Naive thymus-derived CD4-positive, alpha-beta T cell (primary cell): ENCODE measurements at regions of chr1 and their contacts with region 1.

Region 1: DNA sequence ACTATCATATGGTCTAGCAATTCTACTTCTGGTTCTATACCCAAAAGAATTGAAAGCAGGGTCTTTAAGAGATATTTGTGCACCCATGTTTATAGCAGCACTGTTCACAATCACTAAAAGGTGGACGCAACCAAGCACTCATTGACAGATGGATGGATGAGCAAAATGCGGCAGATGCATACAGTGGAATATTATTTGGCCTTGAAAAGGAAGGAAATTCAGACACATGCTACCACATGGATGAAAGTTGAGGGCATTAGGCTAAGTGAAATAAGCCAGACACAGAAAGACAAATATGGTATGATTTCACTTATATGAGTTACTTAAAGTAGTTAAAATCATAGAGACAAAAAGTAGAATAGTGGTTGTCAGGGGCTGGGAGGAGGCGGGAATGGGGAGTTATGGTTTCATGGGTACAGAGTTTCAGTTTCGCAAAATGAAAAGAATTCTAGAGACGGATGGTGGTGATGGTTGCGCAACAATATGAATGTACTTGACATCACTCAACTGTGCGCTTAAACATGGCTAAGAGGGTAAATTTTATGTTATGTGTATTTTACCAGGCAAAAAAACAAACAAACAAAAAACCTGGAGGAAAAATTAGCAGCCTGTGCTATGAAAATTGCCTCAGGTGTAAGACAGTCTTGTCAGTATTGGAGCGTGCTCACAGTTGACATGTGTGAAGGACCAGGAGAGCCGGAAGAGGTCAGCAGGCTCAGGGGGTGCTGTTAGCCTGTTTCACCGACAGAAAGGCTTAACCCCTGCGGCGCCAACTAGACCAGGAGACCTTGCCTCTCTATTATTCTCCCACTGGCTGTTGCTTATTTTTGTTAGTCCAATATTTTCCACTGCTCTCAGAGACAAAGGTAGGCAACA is 26.5 kb downstream of the CD247 start:
- DNase-seq: peak in 6 of 9 donors; percentile 46 to 69 (median 54)
- ATAC-seq: peak; percentile 42
- H3K4me3 ChIP-seq: peak overlapping the region; percentile 35
- H3K4me3 Mint-ChIP-seq: peak overlapping the region; percentile 75 to 88 (median 82)
- H3K27ac ChIP-seq: peak overlapping the region; percentile 96
- H3K27ac Mint-ChIP-seq: peak overlapping the region; percentile 84 to 100 (median 95)
- H3K4me1 ChIP-seq: peaks cover 49 to 94% of the 10 kb centered on the region in 2 donors
- H3K4me1 Mint-ChIP-seq: peaks cover 71 to 100% (median 95%) of the 10 kb centered on the region in 7 donors
- H3K27me3 ChIP-seq: no peaks in the 10 kb centered on the region
- H3K27me3 Mint-ChIP-seq: no peaks in the 10 kb centered on the region

Region 2: GRCh38 chr1:167474191-167474716 is 17.6 kb before region 1 on chr1:
- CTCF ChIA-PET with region 1: interaction called, 7 read pairs
- POLR2A ChIA-PET with region 1: interaction called, 52 read pairs
- intact Hi-C with region 1: loop called (anchors 2 kb)
- DNase-seq: peak in 8 of 9 donors; percentile 41 to 87 (median 58)
- ATAC-seq: peak; percentile 89
- H3K4me3 ChIP-seq: peak overlapping the region; percentile 49
- H3K4me3 Mint-ChIP-seq: peak overlapping the region; percentile 52 to 98 (median 86)
- H3K27ac ChIP-seq: peak overlapping the region; percentile 75
- H3K27ac Mint-ChIP-seq: peak overlapping the region; percentile 47 to 98 (median 95)
- H3K4me1 ChIP-seq: peaks cover 36 to 81% of the 10 kb centered on the region in 2 donors
- H3K4me1 Mint-ChIP-seq: peaks cover 57 to 100% (median 94%) of the 10 kb centered on the region in 7 donors
- H3K27me3 ChIP-seq: no peaks in the 10 kb centered on the region
- H3K27me3 Mint-ChIP-seq: no peaks in the 10 kb centered on the region

Region 3: DNA sequence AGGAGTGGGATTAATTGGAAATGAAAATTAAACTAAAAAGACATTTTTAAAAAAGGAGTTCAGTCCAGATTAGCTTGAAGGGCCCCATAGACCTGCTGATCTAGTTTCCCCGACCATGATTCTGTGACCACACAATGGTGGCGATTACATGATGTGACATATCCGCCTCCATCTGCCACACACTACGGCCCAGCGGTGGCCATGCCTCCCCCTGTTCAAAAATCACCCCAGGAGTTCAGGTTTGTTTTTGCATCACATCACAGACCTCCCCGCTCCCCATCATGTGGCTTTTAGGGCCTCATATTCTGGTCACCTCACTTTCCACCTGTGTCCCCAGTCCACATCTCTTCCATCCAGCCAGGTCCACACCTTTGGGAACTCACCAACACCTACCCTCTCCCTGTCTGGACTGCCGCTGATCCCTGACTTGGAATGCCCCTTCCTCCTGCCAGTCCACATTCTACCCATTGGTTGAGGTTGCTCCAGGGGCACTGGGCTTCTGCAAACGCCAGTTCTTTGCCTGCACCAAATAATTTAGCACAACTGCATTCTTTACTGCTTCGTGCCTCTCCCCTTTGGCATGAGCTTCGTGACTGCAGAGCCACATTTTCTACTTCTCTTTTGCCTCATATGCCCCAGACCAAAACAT is 12.4 kb before region 1 on chr1:
- CTCF ChIA-PET with region 1: interaction called, 7 read pairs
- POLR2A ChIA-PET with region 1: interaction called, 21 read pairs
- intact Hi-C with region 1: loop called (anchors 1 kb)
- DNase-seq: no peak
- ATAC-seq: peak; percentile 15
- H3K4me3 ChIP-seq: no peak overlapping the region
- H3K4me3 Mint-ChIP-seq: peak overlapping the region; percentile 38 to 88 (median 71)
- H3K27ac ChIP-seq: peak overlapping the region; percentile 75
- H3K27ac Mint-ChIP-seq: peak overlapping the region; percentile 43 to 98 (median 93)
- H3K4me1 ChIP-seq: peaks cover 44 to 92% of the 10 kb centered on the region in 2 donors
- H3K4me1 Mint-ChIP-seq: peaks cover 73 to 100% (median 97%) of the 10 kb centered on the region in 7 donors
- H3K27me3 ChIP-seq: no peaks in the 10 kb centered on the region
- H3K27me3 Mint-ChIP-seq: no peaks in the 10 kb centered on the region

Region 4: GRCh38 chr1:167533851-167534300 is 42.1 kb after region 1 on chr1:
- CTCF ChIA-PET with region 1: interaction called, 11 read pairs
- POLR2A ChIA-PET with region 1: interaction called, 3 read pairs
- intact Hi-C with region 1: loop called in 1 of 2 experiments (anchors 5 kb)
- DNase-seq: peak in 8 of 9 donors; percentile 50 to 72 (median 58)
- ATAC-seq: peak; percentile 87
- H3K4me3 ChIP-seq: no peak overlapping the region
- H3K4me3 Mint-ChIP-seq: no peak overlapping the region
- H3K27ac ChIP-seq: no peak overlapping the region
- H3K27ac Mint-ChIP-seq: peak overlapping the region in 1 of 9 donors; percentile 30
- H3K4me1 ChIP-seq: no peaks in the 10 kb centered on the region
- H3K4me1 Mint-ChIP-seq: peaks cover 0 to 11% (median 2%) of the 10 kb centered on the region in 7 donors
- H3K27me3 ChIP-seq: no peaks in the 10 kb centered on the region
- H3K27me3 Mint-ChIP-seq: peaks cover 0 to 3% (median 0%) of the 10 kb centered on the region in 5 donors